AG04450 (cell line): ENCODE measurements at regions of chr2 and their contacts with region 1.

Region 1: DNA sequence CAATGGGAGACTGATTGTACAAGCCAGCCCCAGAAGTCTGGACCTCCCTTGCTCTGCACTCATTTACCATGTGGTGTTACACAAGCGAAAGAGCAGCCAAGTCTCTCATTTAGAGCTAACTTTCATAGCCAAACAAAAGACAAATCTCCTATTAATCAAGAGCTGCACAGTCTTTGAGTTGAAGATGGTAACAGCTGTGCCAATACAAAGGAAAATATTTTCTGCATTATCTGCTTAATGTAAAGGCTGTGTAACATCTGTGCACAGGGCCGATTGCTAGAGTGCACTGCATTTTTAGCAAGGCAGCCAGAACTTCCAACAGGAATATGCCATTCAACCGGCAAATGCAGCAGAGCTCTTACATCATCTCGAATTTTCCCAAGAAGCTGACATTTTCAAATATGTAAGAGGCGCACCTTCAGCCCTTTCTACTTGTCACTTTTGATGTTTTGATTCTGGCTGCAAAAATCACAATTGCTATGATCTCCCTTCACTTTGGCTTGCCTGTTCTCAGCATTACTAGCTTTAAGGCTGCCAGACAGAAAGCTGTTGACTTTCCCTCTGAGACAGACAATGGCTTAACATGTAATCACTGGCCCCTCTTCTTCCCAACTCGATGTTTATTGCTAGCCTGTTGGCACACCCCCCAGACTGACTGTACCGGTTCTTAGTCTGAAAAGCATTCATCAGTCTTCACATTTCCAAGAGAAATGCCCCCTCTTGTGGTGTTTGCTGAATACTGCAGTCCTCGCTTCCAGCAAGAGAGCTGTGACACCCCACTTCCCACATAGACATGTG is 96.9 kb upstream of the TANK start:
- DNase-seq: peak; percentile 67
- H3K4me3 ChIP-seq: no peak overlapping the region; the same call in 1 of the 2 replicates
- H3K27ac ChIP-seq: no peak overlapping the region
- H3K27me3 ChIP-seq: no peaks in the 10 kb centered on the region
- CTCF ChIP-seq: peak; percentile 95

Region 2: GRCh38 chr2:160269803-160270570 is 793.4 kb before region 1 on chr2:
- CTCF ChIA-PET with region 1: interaction called, 18 read pairs
- POLR2A ChIA-PET with region 1: no interaction called
- DNase-seq: peak; percentile 80
- H3K4me3 ChIP-seq: peak overlapping the region; percentile 52
- H3K27ac ChIP-seq: peak overlapping the region; percentile 96
- H3K27me3 ChIP-seq: no peaks in the 10 kb centered on the region
- CTCF ChIP-seq: peak; percentile 75

Region 3: GRCh38 chr2:160970052-160970965 is 93.0 kb before region 1 on chr2:
- CTCF ChIA-PET with region 1: interaction called, 21 read pairs
- POLR2A ChIA-PET with region 1: no interaction called
- DNase-seq: peak; percentile 59
- H3K4me3 ChIP-seq: no peak overlapping the region
- H3K27ac ChIP-seq: no peak overlapping the region
- H3K27me3 ChIP-seq: no peaks in the 10 kb centered on the region
- CTCF ChIP-seq: peak; percentile 86

Region 4: DNA sequence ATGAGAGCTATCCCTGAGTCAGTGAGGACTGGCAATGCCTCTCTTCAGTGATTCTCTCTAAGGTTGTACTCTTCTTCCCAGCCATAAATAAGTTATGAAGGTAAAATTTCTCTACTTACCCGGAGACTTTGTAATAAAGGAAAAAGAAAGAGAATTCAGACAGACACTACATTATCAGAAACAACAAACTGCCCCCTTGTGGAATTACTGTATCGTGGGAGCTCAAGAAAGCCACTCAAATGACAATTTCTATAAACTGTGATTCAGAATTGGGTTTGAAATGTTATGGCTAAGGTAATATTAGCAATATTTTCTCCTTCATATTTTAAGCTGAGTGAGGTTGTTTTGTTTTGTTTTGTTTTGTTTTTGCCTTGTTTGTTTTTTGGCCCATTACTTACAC is 59.0 kb before region 1 on chr2:
- CTCF ChIA-PET with region 1: interaction called, 46 read pairs
- POLR2A ChIA-PET with region 1: no interaction called
- DNase-seq: no peak
- H3K4me3 ChIP-seq: no peak overlapping the region
- H3K27ac ChIP-seq: no peak overlapping the region
- H3K27me3 ChIP-seq: no peaks in the 10 kb centered on the region
- CTCF ChIP-seq: peak; percentile 53

Region 5: DNA sequence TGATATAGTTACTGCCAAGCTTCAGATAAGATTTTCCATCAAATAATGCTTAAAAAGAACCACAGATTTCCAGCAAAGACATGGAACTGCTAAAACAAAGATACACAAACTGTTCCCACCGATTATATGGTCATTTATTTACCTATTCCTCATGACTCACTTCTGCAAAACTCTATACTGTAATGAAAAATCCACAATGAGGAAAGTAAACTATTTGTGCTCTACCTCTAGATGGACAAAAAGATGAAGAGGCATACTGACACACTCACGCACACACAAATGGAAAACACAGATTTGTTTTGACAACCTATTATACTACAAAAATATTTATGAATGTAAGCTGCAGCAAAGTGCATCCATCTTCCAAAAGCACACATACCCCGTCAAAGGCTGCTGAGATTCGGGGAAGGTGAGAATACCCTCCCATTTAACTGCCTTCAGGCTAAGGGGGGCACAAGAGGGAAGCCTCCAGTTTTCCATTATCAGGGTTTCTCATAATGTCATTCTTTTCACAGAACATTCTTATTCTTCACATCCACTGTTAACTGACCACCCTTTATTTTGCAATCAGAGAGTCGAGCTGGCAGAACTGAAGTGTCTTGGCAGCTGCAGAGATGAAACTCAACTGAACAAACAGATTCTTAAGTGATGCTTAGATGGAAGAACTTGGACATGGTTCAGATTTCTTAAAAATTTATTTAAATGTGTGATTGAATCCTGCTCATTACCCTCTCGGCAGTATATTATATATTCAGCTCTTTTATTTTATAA is 19.1 kb before region 1 on chr2:
- CTCF ChIA-PET with region 1: interaction called, 27 read pairs
- POLR2A ChIA-PET with region 1: no interaction called
- DNase-seq: no peak
- H3K4me3 ChIP-seq: no peak overlapping the region
- H3K27ac ChIP-seq: peak overlapping the region; percentile 59
- H3K27me3 ChIP-seq: no peaks in the 10 kb centered on the region
- CTCF ChIP-seq: no peak

Region 6: GRCh38 chr2:161077367-161078210 is 14.2 kb after region 1 on chr2:
- CTCF ChIA-PET with region 1: interaction called, 29 read pairs
- POLR2A ChIA-PET with region 1: no interaction called
- DNase-seq: no peak
- H3K4me3 ChIP-seq: no peak overlapping the region
- H3K27ac ChIP-seq: no peak overlapping the region
- H3K27me3 ChIP-seq: no peaks in the 10 kb centered on the region
- CTCF ChIP-seq: no peak

Region 7: GRCh38 chr2:161112908-161113307 is 49.6 kb after region 1 on chr2:
- CTCF ChIA-PET with region 1: interaction called, 10 read pairs
- POLR2A ChIA-PET with region 1: no interaction called
- DNase-seq: no peak
- H3K4me3 ChIP-seq: no peak overlapping the region
- H3K27ac ChIP-seq: no peak overlapping the region
- H3K27me3 ChIP-seq: peaks cover 5% of the 10 kb centered on the region
- CTCF ChIP-seq: no peak

Region 8: GRCh38 chr2:161780881-161781280 is 717.5 kb after region 1 on chr2:
- CTCF ChIA-PET with region 1: no interaction called
- POLR2A ChIA-PET with region 1: no interaction called
- DNase-seq: no peak
- H3K4me3 ChIP-seq: no peak overlapping the region
- H3K27ac ChIP-seq: no peak overlapping the region
- H3K27me3 ChIP-seq: no peaks in the 10 kb centered on the region
- CTCF ChIP-seq: no peak